Dorsolateral prefrontal cortex (tissue), 120 donors: ENCODE measurements at regions of chr6 and their contacts with region 1.

Region 1: DNA sequence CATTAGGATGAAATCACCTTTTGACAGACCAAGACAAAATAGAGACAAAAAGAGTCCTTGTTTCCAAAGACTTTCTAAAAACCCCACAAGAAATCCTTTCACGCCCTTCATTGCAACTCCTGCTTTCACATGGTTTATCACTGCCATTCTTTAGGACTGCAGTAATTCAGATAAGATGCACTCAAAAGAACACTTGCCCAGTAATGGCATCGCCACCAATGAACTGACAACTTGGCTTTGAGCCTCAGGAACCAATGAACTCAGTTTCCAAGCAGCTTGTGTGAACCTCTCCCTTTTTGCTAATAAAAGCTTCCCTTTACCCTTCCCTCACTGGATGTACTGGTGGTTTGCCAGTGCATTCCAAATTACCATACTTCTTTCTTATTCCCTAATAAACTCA is 21.8 kb downstream of the OSTM1 start:
- DNase-seq: no peak
- H3K4me3 ChIP-seq: no peak overlapping the region
- H3K27ac ChIP-seq: no peak overlapping the region
- H3K27me3 ChIP-seq: no peaks in the 10 kb centered on the region
- CTCF ChIP-seq: no peak

Region 2: GRCh38 chr6:107911692-107912091 is 141.0 kb before region 1 on chr6:
- intact Hi-C with region 1: no loop called
- DNase-seq: no peak
- H3K4me3 ChIP-seq: no peak overlapping the region
- H3K27ac ChIP-seq: no peak overlapping the region
- H3K27me3 ChIP-seq: no peaks in the 10 kb centered on the region
- CTCF ChIP-seq: no peak

Region 3: DNA sequence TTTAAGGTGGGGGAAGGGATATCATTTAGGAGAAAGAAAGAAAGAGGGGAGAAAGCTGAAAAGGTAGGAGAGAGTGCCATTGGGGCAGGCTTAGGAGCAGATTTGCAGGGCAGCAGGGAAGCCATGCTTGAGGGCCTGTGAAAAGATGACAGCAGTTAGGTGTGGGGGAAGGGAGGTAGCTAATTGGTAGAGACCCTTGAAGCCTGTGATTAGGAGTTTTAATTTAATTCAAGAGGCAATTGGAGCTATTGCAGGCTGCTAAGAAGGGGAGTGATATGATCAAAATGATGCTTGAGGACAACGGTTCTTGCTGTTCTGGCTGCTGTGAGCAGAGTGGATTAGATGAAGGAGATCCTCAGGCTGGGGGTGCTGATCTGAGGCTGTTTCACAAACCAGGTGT is 70.2 kb before region 1 on chr6:
- intact Hi-C with region 1: loop called (anchors 2 kb)
- DNase-seq: no peak
- H3K4me3 ChIP-seq: no peak overlapping the region
- H3K27ac ChIP-seq: no peak overlapping the region
- H3K27me3 ChIP-seq: no peaks in the 10 kb centered on the region
- CTCF ChIP-seq: no peak

Region 4: DNA sequence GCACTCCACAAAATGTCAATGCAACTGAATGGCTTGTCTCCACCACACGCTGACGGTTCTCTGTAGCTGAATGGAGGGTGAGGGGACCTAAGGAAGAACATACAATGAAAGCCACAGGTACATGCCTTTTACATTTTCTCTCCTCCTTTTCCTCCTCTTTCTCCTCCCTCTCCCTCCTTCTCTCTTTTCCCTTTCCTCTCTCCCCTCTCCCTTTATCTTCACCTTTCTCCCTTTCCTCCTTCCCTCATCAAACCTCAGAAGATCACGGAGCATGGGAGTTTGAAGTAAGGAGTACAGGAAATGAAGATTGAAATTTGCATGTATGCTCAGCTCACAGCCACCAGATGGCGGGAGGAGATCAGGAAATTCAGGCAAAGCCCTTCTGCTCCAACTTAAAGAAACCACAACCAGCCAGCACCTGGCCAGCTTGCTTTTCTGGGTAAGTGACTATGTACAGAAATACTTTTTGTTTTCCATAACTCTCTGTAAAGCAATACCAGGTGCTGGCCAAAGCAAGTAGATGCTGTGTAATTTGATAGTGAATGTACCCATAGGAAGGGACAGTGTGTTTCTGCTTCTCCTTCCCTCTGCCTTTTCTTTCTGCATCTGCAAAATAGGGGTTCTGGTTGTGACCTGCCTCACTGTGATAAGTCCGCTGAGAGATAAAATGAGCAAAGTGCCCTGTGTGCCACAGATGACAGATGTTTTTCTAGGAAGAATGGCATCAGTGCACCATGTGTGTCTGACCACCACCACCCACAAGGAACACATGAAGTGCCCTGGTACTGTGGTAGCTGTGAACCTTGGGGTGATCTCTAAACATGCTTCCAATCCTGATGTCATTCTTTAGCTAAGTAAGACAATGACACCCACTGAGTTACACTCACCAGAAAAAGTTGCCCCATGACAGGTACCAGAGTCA is 489.4 kb after region 1 on chr6:
- intact Hi-C with region 1: no loop called
- DNase-seq: peak; percentile 33 to 76 (median 70)
- H3K4me3 ChIP-seq: peak overlapping the region in 6 of 59 donors; percentile 18 to 37 (median 32)
- H3K27ac ChIP-seq: no peak overlapping the region
- H3K27me3 ChIP-seq: no peaks in the 10 kb centered on the region
- CTCF ChIP-seq: peak; percentile 68 to 99 (median 91)